WTC11 (cell line): ENCODE measurements at regions of chr2 and their contacts with region 1.

Region 1: DNA sequence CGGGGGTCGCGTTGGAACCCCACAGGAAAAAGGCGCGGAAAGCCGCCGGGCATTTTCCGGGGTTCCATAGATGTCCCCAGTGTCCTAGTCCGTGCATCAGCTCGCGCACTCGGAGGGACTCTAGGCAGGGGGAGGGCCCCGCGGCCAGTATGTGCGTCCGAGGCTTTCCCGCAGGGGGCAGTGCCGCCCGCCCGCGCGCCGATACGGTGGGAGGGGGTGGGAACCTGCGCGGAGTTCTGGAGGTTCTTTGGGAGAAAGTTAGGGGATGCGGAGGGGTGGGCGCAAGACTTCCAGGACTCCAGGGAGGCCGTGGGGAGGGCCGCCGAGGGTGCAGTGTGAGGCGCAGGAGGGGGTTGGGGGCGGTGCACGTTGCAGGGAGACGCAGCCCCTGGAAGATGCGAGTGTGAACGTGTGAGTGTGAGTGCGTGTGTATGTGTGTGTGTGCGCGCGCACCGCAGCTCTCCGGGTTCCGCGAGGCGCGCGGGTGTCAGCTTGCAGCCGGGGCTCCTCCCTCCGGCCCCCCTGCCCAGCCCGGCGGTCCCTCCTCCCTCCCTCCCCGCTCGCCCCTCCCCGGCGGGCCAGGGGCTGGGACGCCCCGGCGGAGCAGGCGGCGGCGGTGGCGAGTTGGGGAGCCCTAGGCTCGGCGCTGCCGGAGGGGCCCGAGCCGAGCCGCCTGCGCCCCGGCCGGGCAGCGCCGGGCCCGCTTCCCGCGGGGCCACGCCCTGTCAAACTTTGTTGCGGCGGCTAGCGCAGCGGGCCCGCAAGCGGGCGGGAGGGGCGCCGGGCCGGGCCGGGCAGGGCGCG is at the start of gene TCF7L1:
- DNase-seq: peak; percentile 93
- ATAC-seq: peak; percentile 78
- H3K4me3 Mint-ChIP-seq: peak within 1 kb of the TSS; percentile 83
- H3K27ac Mint-ChIP-seq: peak within 1 kb of the TSS; percentile 65
- H3K4me1 Mint-ChIP-seq: peaks cover 36% of the 10 kb centered on the region
- H3K27me3 Mint-ChIP-seq: peaks cover 3% of the 10 kb centered on the region
- CTCF ChIP-seq: peak; percentile 73
- total RNA-seq, gene TCF7L1: 104 to 108 TPM (median 106 TPM) in 3 replicates

Region 2: GRCh38 chr2:84970868-84971509 is 162.0 kb before region 1 on chr2 and contains the start of gene KCMF1:
- CTCF ChIA-PET with region 1: no interaction called
- POLR2A ChIA-PET with region 1: no interaction called
- DNase-seq: peak; percentile 74
- ATAC-seq: peak; percentile 66
- H3K4me3 Mint-ChIP-seq: peak within 1 kb of the TSS; percentile 99
- H3K27ac Mint-ChIP-seq: peak within 1 kb of the TSS; percentile 100
- H3K4me1 Mint-ChIP-seq: peaks cover 55% of the 10 kb centered on the region
- H3K27me3 Mint-ChIP-seq: no peaks in the 10 kb centered on the region
- CTCF ChIP-seq: no peak
- total RNA-seq, gene KCMF1: 114 to 118 TPM (median 117 TPM) in 3 replicates

Region 3: GRCh38 chr2:85119900-85120299 is 13.1 kb before region 1 on chr2:
- CTCF ChIA-PET with region 1: interaction called, 14 read pairs
- POLR2A ChIA-PET with region 1: interaction called, 3 read pairs
- DNase-seq: peak; percentile 41
- ATAC-seq: peak; percentile 100
- H3K4me3 Mint-ChIP-seq: no peak overlapping the region
- H3K27ac Mint-ChIP-seq: no peak overlapping the region
- H3K4me1 Mint-ChIP-seq: peaks cover 17% of the 10 kb centered on the region
- H3K27me3 Mint-ChIP-seq: peaks cover 81% of the 10 kb centered on the region
- CTCF ChIP-seq: no peak

Region 4: GRCh38 chr2:85181134-85181631 is 48.1 kb after region 1 on chr2:
- CTCF ChIA-PET with region 1: interaction called, 20 read pairs
- POLR2A ChIA-PET with region 1: interaction called, 4 read pairs
- DNase-seq: no peak
- ATAC-seq: no peak; the same call in 1 of the 2 replicates
- H3K4me3 Mint-ChIP-seq: no peak overlapping the region; the same call in 1 of the 2 replicates
- H3K27ac Mint-ChIP-seq: peak overlapping the region; percentile 84
- H3K4me1 Mint-ChIP-seq: peaks cover 92% of the 10 kb centered on the region
- H3K27me3 Mint-ChIP-seq: no peaks in the 10 kb centered on the region
- CTCF ChIP-seq: no peak

Region 5: GRCh38 chr2:85255813-85256594 is 123.0 kb after region 1 on chr2:
- CTCF ChIA-PET with region 1: interaction called, 18 read pairs
- POLR2A ChIA-PET with region 1: interaction called, 5 read pairs
- DNase-seq: peak; percentile 85
- ATAC-seq: peak; percentile 61
- H3K4me3 Mint-ChIP-seq: peak overlapping the region; percentile 68
- H3K27ac Mint-ChIP-seq: peak overlapping the region; percentile 100
- H3K4me1 Mint-ChIP-seq: peaks cover 94% of the 10 kb centered on the region
- H3K27me3 Mint-ChIP-seq: no peaks in the 10 kb centered on the region
- CTCF ChIP-seq: no peak